ENCODE measurements at regions of chr16 and their contacts with region 1.

Region 1: DNA sequence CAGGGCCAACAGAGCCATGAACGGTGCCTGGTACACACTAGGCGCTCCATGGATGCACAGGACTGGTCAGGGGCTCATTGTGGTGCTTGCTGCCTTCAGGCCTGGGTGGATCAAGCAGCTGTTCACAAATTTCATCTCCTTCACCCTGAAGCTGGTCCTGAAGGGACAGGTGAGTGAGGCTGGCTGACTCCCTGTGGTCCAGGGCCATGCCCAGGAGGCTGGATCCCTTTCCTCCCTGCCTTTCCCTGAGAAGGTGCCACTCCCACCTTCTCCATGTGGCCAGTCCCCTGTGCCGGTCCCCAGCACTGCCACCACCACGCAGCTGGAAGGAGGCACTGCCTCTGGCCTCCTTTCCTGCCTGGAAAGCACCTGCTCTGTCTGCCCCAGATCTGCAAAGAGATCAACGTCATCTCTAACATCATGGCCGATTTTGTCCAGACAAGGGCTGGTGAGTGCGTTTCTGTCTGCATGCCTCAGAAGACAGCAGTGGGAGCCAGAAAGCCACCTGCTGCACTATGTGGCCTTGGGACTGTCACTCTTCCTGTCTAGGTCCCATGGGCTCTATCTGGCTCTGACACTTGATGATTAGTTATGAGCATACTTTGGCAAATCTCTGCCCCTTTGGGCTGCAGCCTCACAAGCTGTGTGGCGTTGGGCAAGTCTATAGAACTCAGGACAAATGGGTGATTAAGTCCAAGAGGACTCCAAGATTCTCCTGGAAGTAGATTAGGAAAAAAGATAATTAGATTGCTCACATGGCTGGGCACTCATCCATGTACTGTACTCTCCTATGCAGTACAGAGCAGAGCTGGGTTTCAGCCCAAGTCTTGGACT is 9.4 kb downstream of the CETP start:
- ATAC-seq: no peak
- H3K4me3 ChIP-seq: no peak overlapping the region
- H3K27ac ChIP-seq: no peak overlapping the region
- H3K4me1 ChIP-seq: peaks cover 0 to 4% of the 10 kb centered on the region in 2 donors

Region 2: DNA sequence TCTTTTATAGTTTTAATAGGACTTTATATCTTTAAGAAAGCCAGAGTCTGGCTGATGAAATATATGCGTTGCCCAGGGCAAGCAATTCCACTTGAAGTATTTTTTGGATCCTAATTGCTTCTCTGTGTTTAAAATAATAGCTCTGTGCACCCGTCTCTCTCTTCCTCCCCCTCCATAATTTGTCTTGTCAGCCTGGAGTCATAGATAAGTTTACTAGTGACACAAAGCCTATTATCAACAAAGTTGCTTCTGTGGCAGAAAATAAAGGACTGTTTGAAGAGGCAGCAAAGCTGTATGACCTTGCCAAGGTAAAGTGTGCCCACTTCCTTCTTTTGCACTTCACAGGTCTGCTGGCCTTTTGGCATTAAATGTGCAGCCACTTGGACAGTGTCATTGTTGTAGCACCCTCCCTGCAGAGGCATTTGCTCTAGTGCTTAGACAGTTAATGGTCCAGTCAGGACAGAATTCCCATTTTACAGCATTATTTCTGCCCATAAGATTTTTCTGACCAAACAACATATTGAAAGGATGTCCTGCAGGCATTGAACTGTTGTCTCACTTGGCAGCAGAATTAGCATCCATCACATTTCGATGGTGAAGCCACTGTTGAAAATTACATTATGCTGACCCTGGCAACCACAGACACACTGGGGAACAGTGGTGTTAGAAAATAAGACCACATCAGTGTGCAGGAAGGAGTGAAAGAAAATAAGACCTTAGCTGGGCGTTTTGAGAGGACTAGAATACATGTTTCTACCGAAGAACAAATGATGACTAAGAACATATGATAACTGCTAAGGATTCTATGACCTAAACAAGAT is 134.5 kb before region 1 on chr16:
- in situ Hi-C with region 1: no loop called
- ATAC-seq: peak in 6 of 8 experiments; percentile 38 to 89 (median 74)
- H3K4me3 ChIP-seq: no peak overlapping the region
- H3K27ac ChIP-seq: peak overlapping the region; percentile 34 to 64
- H3K4me1 ChIP-seq: peaks cover 4 to 21% of the 10 kb centered on the region in 2 donors

Region 3: DNA sequence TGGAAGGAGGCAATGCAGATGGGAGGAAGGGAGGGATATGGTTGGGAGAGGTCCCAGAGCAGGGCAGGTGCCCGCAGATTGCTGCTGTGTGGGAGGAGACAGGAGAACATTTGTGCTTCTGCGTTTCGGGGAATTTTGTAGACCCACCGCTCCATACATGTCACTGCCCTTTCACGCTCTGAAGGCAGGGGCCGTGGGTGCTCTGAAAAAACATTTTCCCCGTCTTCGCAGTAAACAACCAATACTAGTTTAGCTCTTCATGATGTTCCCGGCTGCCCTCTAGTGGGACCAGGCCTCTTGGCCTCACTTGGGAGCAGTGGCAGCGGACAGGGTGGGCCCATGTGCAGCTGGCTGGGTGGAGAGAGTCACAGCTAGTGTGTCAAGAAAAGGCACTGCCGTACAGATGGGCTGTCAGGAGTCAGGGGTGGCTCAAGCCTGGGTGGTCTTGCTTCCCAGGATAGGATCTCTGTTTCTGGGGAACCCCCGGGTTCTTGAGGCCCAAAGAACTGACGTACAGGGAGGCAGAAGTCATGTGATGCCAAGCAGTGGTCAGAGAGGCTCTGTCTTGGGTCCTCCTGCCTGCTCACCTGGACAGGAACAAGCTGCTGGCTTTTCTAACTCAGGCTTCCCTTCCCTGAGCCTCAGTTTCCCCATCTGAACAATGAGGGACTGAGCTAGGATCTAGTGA is 74.7 kb after region 1 on chr16:
- in situ Hi-C with region 1: loop called in 1 of 9 experiments (anchors 10 kb)
- ATAC-seq: peak; percentile 87 to 99 (median 94)
- H3K4me3 ChIP-seq: no peak overlapping the region
- H3K27ac ChIP-seq: no peak overlapping the region
- H3K4me1 ChIP-seq: peaks cover 0 to 4% of the 10 kb centered on the region in 2 donors